Sigmoid colon (tissue), 7 donors: ENCODE measurements at regions of chr11 and their contacts with region 1.

Region 1: DNA sequence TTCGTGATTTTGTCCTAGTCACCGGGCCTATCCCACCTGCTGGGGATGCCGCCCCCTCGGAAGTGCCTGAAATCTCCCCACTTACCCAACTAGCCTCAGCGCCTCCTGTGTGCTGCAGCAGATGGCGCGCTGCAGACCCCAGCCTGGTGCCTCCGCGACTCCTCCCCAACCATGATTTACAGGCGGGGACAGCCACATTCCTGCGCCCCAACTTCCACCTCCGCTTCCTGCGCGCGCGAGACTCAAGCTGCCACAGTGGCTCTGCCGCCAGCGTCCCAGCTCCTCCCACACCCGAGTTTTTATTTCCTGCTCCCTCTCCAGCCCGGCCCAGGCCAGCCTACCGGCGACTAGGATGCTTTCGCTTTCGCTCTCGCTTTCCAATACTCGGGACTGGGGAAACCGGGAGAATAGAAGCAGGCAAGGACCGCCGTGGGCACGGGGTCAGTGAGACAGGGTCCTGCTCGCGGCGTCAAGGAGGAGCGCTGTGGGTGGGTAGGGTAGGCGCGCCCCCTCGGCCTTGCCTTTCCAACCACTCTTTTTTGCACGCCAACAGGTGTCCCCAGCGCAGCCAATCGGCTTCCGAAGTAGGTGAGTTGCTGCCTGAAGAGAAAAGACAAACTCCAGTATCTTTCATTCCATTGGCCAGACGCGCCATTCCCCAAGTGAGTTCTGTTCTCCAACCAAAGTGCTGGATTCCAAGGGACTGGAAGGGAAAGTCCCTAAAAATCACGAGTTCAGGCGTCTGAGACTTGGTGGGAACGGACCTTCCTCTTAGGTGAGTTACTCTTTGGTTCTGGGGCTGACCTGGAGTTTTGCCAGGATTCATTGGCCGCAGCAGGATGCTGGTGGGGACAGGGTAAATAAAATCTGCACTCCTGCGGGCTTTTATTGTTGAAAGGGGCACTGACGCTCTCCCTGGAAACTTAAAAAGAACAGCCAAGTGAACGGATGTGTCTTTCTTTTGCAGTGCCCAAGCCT is at the start of gene FAM111A:
- DNase-seq: peak; percentile 94
- H3K4me3 ChIP-seq: peak within 1 kb of the TSS; percentile 66 to 83 (median 75)
- H3K27ac ChIP-seq: peak within 1 kb of the TSS; percentile 86 to 95 (median 89)
- H3K4me1 ChIP-seq: peaks cover 0 to 30% (median 22%) of the 10 kb centered on the region in 4 donors
- H3K27me3 ChIP-seq: no peaks in the 10 kb centered on the region
- CTCF ChIP-seq: no peak
- EP300 ChIP-seq: no peak
- POLR2A ChIP-seq: no peak
- total RNA-seq, gene FAM111A: 26.0 to 33.4 (median 29.0) TPM

Region 2: DNA sequence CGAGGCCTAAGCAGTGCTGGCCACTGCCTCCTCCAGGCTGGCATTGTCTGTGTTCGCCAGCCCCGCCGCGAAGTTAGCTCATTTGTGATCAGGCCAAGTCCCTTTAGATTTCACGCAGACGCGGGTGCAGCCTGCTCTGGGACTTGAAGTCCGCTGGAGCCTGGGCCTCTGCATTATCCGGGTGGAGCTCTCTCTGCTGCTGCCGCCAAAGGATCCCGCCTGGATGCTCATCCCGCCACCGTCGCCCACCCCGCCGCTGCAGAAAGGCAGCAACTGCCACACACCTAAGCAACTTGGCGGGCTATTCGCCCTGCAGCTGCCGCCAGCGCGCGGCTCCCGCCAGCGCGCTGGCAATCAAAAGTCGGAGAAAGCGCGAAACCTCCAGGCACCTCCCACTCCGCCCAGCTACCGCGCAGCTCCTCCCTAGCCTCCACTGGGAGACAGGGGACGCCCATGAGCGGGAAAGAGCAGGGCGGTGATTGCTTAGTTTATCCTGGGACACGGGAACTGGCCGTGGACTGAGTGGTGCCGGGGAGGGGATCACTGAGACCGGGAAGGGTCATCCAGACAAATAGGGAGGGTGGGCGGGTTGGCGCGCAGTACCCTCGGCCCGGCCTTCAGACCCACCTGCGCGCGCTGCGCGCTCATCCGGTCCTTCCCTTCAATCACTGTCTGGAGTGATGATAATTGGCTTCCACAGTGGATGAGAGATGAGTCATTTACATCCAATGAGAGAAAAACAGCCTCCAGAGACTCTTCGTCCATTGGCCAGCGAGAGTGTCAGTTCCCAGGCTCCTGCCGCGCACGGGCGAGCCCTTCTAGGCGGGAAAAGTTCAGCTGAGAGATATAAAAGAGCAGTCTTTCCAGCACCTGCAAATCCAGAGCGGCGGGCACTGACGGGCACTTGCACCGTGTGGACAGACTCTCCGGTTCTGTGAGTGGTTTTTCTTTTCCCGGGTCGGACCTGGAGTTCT is 36.2 kb before region 1 on chr11 and contains the start of gene FAM111B:
- intact Hi-C with region 1: loop called (anchors 2 kb)
- DNase-seq: peak; percentile 91
- H3K4me3 ChIP-seq: peak within 1 kb of the TSS; percentile 42 to 54 (median 48)
- H3K27ac ChIP-seq: peak within 1 kb of the TSS in 3 of 4 donors; percentile 41 to 50 (median 46)
- H3K4me1 ChIP-seq: peaks cover 0 to 24% (median 21%) of the 10 kb centered on the region in 4 donors
- H3K27me3 ChIP-seq: peaks cover 0 to 10% (median 9%) of the 10 kb centered on the region in 3 donors
- CTCF ChIP-seq: no peak
- EP300 ChIP-seq: no peak
- POLR2A ChIP-seq: no peak
- total RNA-seq, gene FAM111B: 0.27 to 0.36 TPM in 2 of 4 donors, not detected in the others

Region 3: DNA sequence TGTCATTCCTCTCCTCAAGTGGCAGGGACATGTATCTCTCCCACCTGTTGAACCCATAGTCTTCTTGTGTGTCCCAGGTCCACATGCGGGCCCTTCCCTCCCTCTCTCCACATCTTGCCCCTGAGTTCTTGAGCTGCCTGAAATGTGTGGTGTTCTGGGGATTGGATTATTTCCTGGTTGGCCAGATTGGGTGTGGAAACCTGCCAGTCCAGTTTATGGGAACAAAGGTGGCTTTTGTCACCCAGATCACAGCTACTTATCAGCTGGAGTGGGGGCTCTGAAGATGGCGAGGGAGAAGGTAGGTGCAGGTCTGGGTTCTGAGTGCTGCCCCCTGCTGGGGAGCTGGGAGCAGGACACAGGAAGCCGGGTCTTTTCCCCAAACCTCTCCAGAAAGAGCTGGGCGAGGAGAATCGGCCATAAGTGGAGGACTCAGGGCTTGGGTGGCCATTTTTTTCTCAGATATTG is 43.3 kb after region 1 on chr11:
- intact Hi-C with region 1: no loop called
- DNase-seq: no peak
- H3K4me3 ChIP-seq: no peak overlapping the region
- H3K27ac ChIP-seq: peak overlapping the region; percentile 8 to 54 (median 28)
- H3K4me1 ChIP-seq: peaks cover 0 to 14% (median 8%) of the 10 kb centered on the region in 4 donors
- H3K27me3 ChIP-seq: peaks cover 0 to 8% (median 0%) of the 10 kb centered on the region in 3 donors
- CTCF ChIP-seq: peak in 2 of 4 experiments; percentile 30 to 68
- EP300 ChIP-seq: no peak
- POLR2A ChIP-seq: peak in 1 of 2 donors; percentile 29

Region 4: DNA sequence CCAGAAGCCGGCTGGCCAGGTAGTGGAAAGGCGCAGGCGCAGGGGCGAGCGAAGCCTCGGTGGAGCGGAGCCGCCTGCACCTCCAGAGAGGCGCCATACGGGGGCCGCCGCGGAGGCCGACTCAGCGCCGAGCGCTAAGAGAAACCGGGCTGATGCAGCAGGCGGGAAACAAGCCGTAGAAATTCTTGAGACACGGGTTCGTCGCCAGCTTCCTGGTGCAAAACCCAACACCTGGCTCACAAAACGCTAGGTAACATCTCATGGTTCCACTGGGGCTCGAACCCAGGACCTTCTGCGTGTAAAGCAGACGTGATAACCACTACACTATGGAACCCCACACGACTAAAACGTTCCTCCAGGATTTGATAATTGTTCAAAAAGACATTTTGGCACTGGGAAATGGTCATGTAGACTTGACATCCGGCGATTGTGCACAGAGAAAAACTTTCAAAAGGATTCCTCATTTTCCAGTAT is 407.6 kb after region 1 on chr11:
- intact Hi-C with region 1: loop called (anchors 10 kb)
- DNase-seq: peak; percentile 91
- H3K4me3 ChIP-seq: peak overlapping the region; percentile 46 to 55 (median 52)
- H3K27ac ChIP-seq: peak overlapping the region; percentile 80 to 87 (median 82)
- H3K4me1 ChIP-seq: peaks cover 0 to 13% (median 3%) of the 10 kb centered on the region in 4 donors
- H3K27me3 ChIP-seq: no peaks in the 10 kb centered on the region
- CTCF ChIP-seq: peak; percentile 46 to 76 (median 54)
- EP300 ChIP-seq: no peak
- POLR2A ChIP-seq: no peak